Activated CD8-positive, alpha-beta T cell treated with anti-CD3 and anti-CD28 coated beads, Interleukin-2, amount 10 ng/mL, durations not matched to agents 7 days and 5 days (primary cell): ENCODE measurements at regions of chr11 and their contacts with region 1.

Region 1: DNA sequence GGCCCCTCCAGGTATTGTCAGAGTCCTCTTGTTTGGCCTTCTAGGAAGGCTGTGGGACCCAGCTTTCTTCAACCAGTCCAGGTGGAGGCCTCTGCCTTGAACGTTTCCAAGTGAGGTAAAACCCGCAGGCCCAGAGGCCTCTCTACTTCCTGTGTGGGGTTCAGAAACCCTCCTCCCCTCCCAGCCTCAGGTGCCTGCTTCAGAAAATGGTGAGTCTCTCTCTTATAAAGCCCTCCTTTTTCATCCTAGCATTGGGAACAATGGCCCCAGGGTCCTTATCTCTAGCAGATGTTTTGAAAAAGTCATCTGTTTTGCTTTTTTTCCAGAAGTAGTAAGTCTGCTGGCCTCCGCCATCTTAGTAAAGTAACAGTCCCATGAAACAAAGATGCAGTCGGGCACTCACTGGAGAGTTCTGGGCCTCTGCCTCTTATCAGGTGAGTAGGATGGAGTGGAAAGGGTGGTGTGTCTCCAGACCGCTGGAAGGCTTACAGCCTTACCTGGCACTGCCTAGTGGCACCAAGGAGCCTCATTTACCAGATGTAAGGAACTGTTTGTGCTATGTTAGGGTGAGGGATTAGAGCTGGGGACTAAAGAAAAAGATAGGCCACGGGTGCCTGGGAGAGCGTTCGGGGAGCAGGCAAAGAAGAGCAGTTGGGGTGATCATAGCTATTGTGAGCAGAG is at the start of gene CD3E:
- DNase-seq: peak; percentile 87
- ATAC-seq: peak; percentile 82
- H3K4me3 Mint-ChIP-seq: peak within 1 kb of the TSS; percentile 99
- H3K27ac Mint-ChIP-seq: peak within 1 kb of the TSS; percentile 99
- H3K4me1 Mint-ChIP-seq: peaks cover 64% of the 10 kb centered on the region
- H3K27me3 Mint-ChIP-seq: no peaks in the 10 kb centered on the region
- total RNA-seq, gene CD3E: 515 to 530 TPM

Region 2: GRCh38 chr11:118258410-118258809 is 46.3 kb before region 1 on chr11:
- CTCF ChIA-PET with region 1: interaction called, 15 read pairs
- POLR2A ChIA-PET with region 1: interaction called, 4 read pairs
- DNase-seq: peak; percentile 42
- ATAC-seq: no peak
- H3K4me3 Mint-ChIP-seq: no peak overlapping the region
- H3K27ac Mint-ChIP-seq: no peak overlapping the region
- H3K4me1 Mint-ChIP-seq: peaks cover 56% of the 10 kb centered on the region
- H3K27me3 Mint-ChIP-seq: no peaks in the 10 kb centered on the region

Region 3: DNA sequence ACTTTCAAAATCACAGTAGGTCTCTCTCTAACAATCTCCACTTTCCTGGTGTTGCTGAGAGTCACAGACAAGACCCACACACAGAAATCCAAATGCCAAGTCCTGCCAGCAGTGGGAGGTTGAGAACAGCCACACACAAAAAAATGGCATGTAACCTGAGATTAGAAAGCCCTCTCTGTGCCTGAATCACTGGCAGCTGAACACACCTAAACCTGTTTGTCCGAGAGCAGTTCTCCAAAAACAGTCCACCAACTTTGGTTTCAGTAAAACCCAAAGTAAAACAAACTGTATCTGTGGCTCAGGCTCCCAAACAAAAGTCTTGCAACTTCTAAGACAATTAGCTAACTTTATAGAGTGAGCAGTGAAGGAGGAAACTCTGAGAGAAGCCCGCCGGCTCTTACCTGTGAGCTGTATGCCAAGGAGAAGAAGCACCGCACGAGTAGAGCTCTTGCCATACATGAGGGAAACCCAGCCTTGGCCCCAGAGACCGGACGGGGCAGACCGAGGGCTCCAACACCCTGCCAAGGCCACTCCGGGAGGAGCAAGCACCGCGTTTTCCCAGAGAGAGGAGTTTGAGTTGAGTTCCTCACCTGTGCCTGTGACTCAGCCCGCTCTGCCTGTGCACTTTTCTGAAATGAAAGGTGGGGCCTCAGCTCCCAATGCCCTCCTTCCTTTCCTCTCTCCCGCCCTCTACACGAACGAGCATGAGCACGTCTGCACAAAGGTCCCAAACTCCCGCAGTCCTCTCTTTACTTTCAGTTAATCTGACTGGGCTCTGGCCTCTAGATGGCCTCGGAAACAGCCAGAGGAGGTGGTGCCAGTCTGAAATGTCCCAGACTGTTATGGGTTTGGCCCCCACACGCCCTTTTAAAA is 40.8 kb before region 1 on chr11 and contains the start of gene MPZL2:
- CTCF ChIA-PET with region 1: interaction called, 15 read pairs
- POLR2A ChIA-PET with region 1: interaction called, 4 read pairs
- DNase-seq: peak; percentile 55
- ATAC-seq: peak; percentile 73
- H3K4me3 Mint-ChIP-seq: peak within 1 kb of the TSS; percentile 77
- H3K27ac Mint-ChIP-seq: peak within 1 kb of the TSS; percentile 23
- H3K4me1 Mint-ChIP-seq: peaks cover 65% of the 10 kb centered on the region
- H3K27me3 Mint-ChIP-seq: peaks cover 3% of the 10 kb centered on the region
- total RNA-seq, gene MPZL2: 11.7 to 12.2 TPM

Region 4: GRCh38 chr11:118353084-118353710 is 48.5 kb after region 1 on chr11:
- CTCF ChIA-PET with region 1: no interaction called
- POLR2A ChIA-PET with region 1: interaction called, 19 read pairs
- DNase-seq: no peak
- ATAC-seq: peak; percentile 37
- H3K4me3 Mint-ChIP-seq: no peak overlapping the region
- H3K27ac Mint-ChIP-seq: peak overlapping the region; percentile 70
- H3K4me1 Mint-ChIP-seq: peaks cover 39% of the 10 kb centered on the region
- H3K27me3 Mint-ChIP-seq: no peaks in the 10 kb centered on the region

Region 5: DNA sequence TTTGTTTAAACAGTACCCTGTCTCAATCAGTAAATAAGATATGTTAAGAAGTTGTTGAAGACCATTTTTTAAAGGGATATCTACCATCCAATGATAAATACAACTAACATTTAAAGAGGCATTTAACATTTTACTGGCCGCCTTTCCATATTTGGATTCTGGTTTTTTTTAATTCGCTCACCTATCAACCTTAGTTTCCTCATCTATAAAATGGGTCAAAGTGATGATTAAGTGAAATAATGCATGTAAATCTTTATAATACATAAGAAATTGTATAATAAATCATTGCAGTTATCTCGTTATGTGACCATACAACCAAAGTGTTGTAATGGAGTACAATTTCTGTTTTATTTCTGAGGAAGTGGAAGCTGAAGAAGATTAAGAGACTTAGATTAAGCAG is 78.9 kb after region 1 on chr11:
- CTCF ChIA-PET with region 1: no interaction called
- POLR2A ChIA-PET with region 1: no interaction called
- DNase-seq: no peak
- ATAC-seq: no peak
- H3K4me3 Mint-ChIP-seq: no peak overlapping the region
- H3K27ac Mint-ChIP-seq: peak overlapping the region; percentile 15
- H3K4me1 Mint-ChIP-seq: no peaks in the 10 kb centered on the region
- H3K27me3 Mint-ChIP-seq: no peaks in the 10 kb centered on the region

Region 6: GRCh38 chr11:118514103-118514502 is 209.4 kb after region 1 on chr11:
- CTCF ChIA-PET with region 1: no interaction called
- POLR2A ChIA-PET with region 1: no interaction called
- DNase-seq: peak; percentile 37
- ATAC-seq: peak; percentile 71
- H3K4me3 Mint-ChIP-seq: no peak overlapping the region
- H3K27ac Mint-ChIP-seq: peak overlapping the region; percentile 64
- H3K4me1 Mint-ChIP-seq: peaks cover 7% of the 10 kb centered on the region
- H3K27me3 Mint-ChIP-seq: no peaks in the 10 kb centered on the region